Activated naive CD4-positive, alpha-beta T cell treated with anti-CD3 and anti-CD28 coated beads for 36 hours (primary cell): ENCODE measurements at regions of chr11 and their contacts with region 1.

Region 1: DNA sequence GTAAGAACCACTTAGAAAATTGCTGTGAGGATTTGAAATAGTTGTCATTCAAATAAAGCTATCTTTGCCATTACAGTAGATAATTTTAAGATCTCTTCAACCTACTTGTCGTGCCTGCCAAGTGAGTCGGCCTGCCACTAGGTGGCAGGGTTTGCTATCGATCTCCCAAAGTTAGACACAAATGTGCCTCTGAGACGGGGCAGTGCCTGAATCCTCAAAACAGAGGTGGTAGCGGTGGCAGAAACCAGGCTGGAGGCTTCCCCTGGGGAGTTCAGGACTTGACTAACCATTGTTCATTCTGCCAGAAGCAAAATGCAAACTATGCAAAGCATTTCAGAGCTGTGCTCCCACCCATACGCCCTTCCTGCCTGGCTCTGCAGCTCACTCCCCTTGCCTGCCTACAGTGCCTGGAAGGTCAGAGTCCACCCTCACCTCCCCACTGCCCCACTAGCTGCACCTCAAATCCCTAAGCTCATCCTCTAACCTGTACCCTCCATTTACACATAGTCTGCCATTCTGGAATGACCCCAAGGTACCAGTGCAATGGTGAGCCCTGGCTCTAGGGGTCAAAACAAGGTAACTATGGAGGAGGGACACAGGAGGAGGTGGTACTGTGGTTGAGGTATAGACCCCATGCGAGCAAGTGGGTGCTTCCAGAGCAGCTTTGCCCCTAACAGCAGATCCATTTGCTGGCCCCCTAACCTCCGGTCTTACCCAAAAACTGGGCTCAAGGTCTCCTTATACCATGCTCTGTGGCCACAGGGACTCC is 82.1 kb downstream of the C11orf58 start:
- DNase-seq: peak; percentile 87
- H3K4me3 Mint-ChIP-seq: no peak overlapping the region
- H3K27ac Mint-ChIP-seq: no peak overlapping the region
- H3K4me1 Mint-ChIP-seq: peaks cover 4% of the 10 kb centered on the region
- H3K27me3 Mint-ChIP-seq: peaks cover 2% of the 10 kb centered on the region

Region 2: GRCh38 chr11:16785520-16786128 is 34.9 kb before region 1 on chr11:
- CTCF ChIA-PET with region 1: interaction called, 15 read pairs
- intact Hi-C with region 1: loop called (anchors 1 kb)
- DNase-seq: peak; percentile 79
- H3K4me3 Mint-ChIP-seq: no peak overlapping the region
- H3K27ac Mint-ChIP-seq: no peak overlapping the region
- H3K4me1 Mint-ChIP-seq: no peaks in the 10 kb centered on the region
- H3K27me3 Mint-ChIP-seq: no peaks in the 10 kb centered on the region

Region 3: DNA sequence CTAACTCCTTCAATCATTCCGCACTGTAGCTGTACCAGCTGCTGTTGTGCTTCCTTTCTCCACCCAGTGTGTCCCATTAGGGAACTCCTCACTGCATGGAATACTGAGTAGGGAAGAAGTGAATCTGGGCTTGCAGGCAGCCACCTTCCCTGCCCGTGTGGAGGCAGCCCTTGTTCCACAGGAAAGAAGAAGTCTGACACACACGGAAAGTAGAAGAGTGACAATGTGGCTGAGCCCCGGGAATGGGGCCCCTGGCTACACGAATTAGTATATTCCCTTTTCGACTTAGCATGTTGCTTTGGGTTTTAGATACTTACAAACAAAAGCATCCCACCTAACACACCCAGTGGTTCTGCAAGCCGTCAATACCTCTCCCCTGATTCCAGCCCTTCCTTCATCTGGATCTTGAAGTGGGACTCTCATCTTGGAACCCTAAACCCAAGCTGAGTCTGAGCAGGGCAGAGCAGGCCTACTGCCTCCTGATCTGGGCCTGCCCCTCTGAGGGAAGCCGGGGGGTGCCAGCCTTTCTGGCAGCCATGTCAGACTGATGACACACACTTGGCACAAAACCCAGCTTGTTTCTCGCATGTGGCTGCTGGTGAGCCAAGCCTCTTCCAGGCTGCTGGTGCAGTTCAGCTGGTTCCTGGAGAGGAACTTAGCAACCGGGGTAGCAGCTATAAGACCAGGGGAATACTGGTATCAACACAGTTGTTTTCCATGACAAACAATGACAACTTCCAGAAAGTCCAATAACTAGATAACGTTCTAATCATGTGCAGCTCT is 10.4 kb before region 1 on chr11:
- CTCF ChIA-PET with region 1: interaction called, 20 read pairs
- intact Hi-C with region 1: no loop called
- DNase-seq: no peak
- H3K4me3 Mint-ChIP-seq: no peak overlapping the region
- H3K27ac Mint-ChIP-seq: no peak overlapping the region
- H3K4me1 Mint-ChIP-seq: no peaks in the 10 kb centered on the region
- H3K27me3 Mint-ChIP-seq: no peaks in the 10 kb centered on the region

Region 4: GRCh38 chr11:16883174-16883573 is 62.7 kb after region 1 on chr11:
- CTCF ChIA-PET with region 1: interaction called, 9 read pairs
- intact Hi-C with region 1: loop called (anchors 1 kb)
- DNase-seq: no peak
- H3K4me3 Mint-ChIP-seq: no peak overlapping the region
- H3K27ac Mint-ChIP-seq: no peak overlapping the region
- H3K4me1 Mint-ChIP-seq: no peaks in the 10 kb centered on the region
- H3K27me3 Mint-ChIP-seq: no peaks in the 10 kb centered on the region

Region 5: DNA sequence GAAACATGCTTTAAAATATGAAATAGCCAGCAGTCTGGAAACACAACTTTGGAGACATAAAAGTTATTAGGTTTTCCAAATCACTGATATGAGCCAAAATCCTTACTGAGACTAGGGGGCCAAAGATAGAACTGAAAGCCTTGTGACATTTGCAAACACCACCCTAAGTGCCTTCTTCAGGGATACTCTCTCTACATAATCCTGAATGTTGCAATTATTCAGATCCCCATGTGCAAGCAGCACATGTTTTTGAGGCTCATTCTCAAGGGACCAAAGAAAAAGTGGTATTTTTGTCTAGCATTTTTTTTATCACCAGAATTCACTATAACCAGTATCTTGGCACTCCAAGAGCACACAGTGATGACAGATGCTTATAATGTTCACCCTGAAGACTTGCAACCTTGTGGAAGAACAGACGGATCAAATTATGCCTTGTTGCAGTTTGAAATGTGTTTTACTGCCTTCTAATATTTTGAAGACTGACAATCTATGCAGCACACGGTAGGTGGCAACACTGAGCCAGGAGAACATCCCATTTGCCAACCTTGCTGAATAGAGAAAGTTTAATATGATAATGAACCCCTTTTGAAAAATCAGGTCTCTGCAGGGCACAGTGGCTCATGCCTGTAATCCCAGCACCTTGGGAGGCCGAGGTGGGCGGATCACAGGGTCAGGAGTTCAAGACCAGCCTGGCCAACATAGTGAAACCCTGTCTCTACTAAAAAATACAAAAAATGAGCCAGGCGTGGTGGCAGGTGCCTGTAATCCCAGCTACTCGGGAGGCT is 115.2 kb after region 1 on chr11:
- CTCF ChIA-PET with region 1: interaction called, 13 read pairs
- intact Hi-C with region 1: loop called (anchors 1 kb)
- DNase-seq: peak; percentile 53
- H3K4me3 Mint-ChIP-seq: no peak overlapping the region
- H3K27ac Mint-ChIP-seq: no peak overlapping the region
- H3K4me1 Mint-ChIP-seq: no peaks in the 10 kb centered on the region
- H3K27me3 Mint-ChIP-seq: peaks cover 5% of the 10 kb centered on the region

Region 6: GRCh38 chr11:17063171-17064002 is 242.9 kb after region 1 on chr11:
- CTCF ChIA-PET with region 1: interaction called, 91 read pairs
- intact Hi-C with region 1: loop called (anchors 1 kb)
- DNase-seq: peak; percentile 74
- H3K4me3 Mint-ChIP-seq: no peak overlapping the region
- H3K27ac Mint-ChIP-seq: no peak overlapping the region
- H3K4me1 Mint-ChIP-seq: no peaks in the 10 kb centered on the region
- H3K27me3 Mint-ChIP-seq: no peaks in the 10 kb centered on the region

Region 7: DNA sequence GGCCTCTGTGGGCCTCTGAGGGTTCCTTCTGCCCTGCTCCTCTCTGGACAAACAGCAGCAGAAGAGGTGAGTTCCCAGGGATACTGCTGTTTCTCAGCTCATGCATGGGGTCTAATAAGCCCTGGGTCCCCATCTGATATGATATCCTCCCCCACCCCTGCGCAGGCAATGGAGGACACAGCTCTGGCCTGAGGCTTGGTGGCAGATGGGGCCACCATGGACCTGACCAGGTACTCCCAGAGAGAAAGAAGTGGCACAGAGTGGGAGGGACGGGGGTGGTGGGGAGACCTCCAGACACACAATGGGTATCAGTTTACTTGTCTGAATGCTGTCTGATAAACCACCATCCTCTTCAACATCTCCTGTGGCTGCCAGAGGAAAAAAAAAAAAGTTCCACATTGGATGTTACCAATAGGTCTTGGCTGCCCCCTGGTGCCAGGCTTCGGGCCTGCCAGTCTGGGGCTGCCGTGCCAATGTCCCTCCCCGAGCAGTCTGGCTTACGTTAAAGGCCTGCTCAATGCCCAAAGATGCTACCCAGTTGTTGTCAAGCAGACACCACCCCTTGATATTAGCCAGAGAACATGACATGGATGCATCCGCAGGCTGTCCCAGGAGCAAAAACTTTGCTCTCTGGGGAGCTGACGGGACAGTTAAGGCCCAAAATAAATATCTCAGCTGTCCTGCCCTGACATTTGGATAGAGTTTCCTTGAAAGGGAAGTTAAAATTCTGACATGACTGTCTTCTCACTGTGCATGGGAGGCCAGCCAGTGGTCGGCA is 684.0 kb after region 1 on chr11:
- CTCF ChIA-PET with region 1: no interaction called
- intact Hi-C with region 1: loop called (anchors 1 kb)
- DNase-seq: peak; percentile 85
- H3K4me3 Mint-ChIP-seq: no peak overlapping the region
- H3K27ac Mint-ChIP-seq: no peak overlapping the region
- H3K4me1 Mint-ChIP-seq: no peaks in the 10 kb centered on the region
- H3K27me3 Mint-ChIP-seq: peaks cover 4% of the 10 kb centered on the region